ENCODE measurements at regions of chr14 and their contacts with region 1.

Region 1: GRCh38 chr14:103528587-103529382 is at the start of gene TRMT61A:
- DNase-seq: peak; percentile 86
- H3K4me3 ChIP-seq: peak within 1 kb of the TSS; percentile 95
- H3K27ac ChIP-seq: peak within 1 kb of the TSS; percentile 82
- H3K27me3 ChIP-seq: peaks cover 2% of the 10 kb centered on the region
- CTCF ChIP-seq: no peak
- polyA plus RNA-seq, gene TRMT61A: 4.4 and 6.1 TPM in 2 replicates

Region 2: DNA sequence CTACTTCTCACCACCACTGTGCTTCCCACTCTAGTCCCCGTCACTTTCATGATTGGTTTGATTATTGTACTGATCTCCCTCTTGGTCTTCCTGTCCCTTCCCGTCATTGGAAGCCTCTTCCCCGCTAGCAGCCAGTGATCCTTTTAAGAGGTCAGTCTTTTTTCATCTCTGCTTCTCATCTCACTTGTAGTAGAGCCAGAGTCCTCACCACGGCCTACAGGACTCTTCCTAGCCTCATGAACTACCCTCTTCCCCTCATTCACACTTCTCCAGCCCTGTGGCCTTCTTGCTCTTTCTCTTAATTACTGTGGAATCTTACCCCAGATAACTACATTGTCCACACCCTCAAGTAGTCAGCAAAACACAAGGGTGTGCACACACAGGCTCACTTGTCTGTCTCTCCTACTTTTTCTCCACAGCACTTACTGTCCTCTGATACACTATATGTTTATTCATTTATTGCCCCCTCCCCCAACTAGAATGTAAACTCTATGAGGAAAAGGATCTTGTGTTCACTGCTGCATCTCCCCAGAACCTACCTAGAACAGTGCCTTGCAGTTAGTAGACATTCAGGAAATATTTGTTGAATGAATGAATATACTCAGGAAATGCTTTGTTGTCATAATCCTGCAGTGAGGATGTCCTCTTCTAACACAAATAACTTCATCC is 72.5 kb before region 1 on chr14:
- CTCF ChIA-PET with region 1: no interaction called
- POLR2A ChIA-PET with region 1: no interaction called
- DNase-seq: no peak
- H3K4me3 ChIP-seq: no peak overlapping the region
- H3K27ac ChIP-seq: no peak overlapping the region
- H3K27me3 ChIP-seq: no peaks in the 10 kb centered on the region
- CTCF ChIP-seq: no peak

Region 3: DNA sequence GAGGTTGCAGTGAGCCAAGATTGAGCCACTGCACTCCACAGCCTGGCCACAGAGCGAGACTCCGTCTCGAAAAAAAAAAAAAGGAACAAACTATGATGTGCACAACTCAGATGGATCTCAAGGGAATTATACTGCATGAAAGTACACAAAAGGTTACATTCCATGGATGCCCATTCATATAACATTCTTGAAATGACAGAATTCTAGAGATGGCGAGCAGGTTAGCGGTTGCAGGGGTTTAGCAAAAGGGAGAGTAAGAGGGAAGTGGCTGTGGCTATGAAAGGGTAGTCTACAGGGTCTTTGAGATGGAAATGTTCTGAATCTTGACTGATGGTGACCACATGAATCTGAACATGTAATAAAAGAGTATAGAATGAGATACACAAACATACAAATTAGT is 55.8 kb before region 1 on chr14:
- CTCF ChIA-PET with region 1: no interaction called
- POLR2A ChIA-PET with region 1: no interaction called
- DNase-seq: no peak
- H3K4me3 ChIP-seq: no peak overlapping the region
- H3K27ac ChIP-seq: no peak overlapping the region
- H3K27me3 ChIP-seq: no peaks in the 10 kb centered on the region
- CTCF ChIP-seq: no peak

Region 4: GRCh38 chr14:103540821-103541708 is 12.3 kb after region 1 on chr14:
- CTCF ChIA-PET with region 1: no interaction called
- POLR2A ChIA-PET with region 1: interaction called, 18 read pairs
- DNase-seq: no peak
- H3K4me3 ChIP-seq: no peak overlapping the region
- H3K27ac ChIP-seq: peak overlapping the region; percentile 70
- H3K27me3 ChIP-seq: no peaks in the 10 kb centered on the region
- CTCF ChIP-seq: no peak

Region 5: DNA sequence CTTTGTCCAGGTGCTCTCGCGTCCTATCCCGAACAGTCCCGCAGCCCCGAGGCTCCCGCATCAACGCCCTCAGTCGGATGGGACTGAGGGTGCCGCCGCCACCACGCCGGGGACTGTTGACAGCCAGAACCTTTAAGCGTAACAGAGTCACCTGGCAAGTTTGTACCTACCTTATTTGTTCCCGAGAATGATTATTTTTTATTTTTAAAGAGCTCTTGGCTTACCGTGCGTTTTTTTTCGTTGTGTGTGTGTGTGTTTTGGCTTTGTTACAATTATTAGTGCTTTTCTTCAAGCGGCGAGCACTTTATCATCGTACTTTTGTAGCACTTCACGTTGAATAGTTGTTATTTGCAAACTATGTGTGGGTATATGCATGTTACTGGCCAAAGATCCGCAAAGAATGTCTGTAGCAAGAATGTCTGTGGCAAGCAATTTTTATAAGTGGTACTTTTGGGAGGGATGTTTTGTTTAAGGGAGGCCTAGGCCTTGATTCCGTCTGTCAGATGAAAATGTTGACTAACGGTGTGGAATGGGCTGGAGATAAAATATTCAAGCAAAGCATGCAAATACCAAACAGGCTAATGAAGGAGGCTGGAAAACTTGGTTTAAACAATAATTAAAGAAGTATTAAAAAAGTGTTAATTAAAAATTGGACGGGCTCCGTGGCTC is 34.6 kb after region 1 on chr14:
- CTCF ChIA-PET with region 1: no interaction called
- POLR2A ChIA-PET with region 1: interaction called, 13 read pairs
- DNase-seq: no peak
- H3K4me3 ChIP-seq: peak overlapping the region; percentile 83
- H3K27ac ChIP-seq: peak overlapping the region; percentile 47
- H3K27me3 ChIP-seq: no peaks in the 10 kb centered on the region
- CTCF ChIP-seq: no peak

Region 6: DNA sequence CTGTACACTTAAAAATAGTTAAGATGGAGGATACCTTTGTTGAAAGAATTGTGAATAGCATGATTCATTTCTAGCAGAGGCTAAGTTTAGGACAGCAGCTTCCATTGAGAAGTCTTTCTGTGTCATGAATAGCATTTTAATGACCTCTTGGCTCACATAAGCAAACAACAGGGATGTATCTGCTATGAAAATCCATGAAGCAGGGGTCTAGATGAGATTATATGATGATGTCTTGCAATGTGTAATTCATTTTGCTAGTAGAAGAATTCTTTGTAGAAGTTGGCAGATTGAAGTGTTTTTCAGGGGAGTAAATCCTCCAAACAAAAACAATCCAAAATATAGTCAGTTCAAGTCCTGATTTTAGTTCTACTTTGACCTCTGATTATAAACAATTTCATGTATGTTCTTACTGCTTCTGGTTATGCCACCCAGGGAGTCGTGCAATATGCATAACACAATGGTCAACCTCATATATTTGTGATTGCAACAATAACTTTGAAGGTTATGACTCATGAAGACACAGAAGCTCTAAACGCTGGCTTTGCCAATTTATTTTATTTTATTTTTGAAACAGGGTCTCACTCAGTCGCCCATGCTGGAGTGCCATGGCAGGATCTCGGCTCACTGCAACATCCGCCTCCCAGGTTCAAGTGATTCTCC is 420.5 kb after region 1 on chr14:
- CTCF ChIA-PET with region 1: no interaction called
- POLR2A ChIA-PET with region 1: no interaction called
- DNase-seq: no peak
- H3K4me3 ChIP-seq: no peak overlapping the region
- H3K27ac ChIP-seq: no peak overlapping the region
- H3K27me3 ChIP-seq: no peaks in the 10 kb centered on the region
- CTCF ChIP-seq: no peak

Measured in AG04450 (cell line).